Natural killer cell (primary cell): ENCODE measurements at regions of chr10 and their contacts with region 1.

Region 1: DNA sequence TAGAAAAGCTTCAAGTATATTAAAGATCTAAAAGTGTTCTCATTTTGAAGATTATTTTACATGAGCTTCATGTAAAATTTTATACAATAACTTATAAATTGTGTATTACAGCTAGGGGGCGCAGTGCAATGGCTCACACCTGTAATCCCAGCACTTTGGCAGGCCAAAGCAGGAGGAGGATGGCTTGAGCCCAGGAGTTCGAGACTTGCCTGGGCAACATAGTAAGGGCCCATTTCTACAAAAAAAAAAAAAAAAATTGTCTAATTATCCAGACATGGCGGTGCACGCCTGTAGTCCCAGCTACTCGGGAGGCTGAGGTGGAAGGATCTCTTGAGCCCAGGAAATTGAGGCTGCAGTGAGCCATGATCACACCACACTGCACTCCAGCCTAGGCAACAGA is 16.6 kb downstream of the ACBD5 start:
- DNase-seq: peak in 1 of 2 donors; percentile 79
- ATAC-seq: no peak
- H3K4me3 ChIP-seq: no peak overlapping the region
- H3K4me3 Mint-ChIP-seq: peak overlapping the region; percentile 86
- H3K27ac ChIP-seq: no peak overlapping the region
- H3K27ac Mint-ChIP-seq: peak overlapping the region; percentile 40 to 86
- H3K4me1 ChIP-seq: peaks cover 32% of the 10 kb centered on the region
- H3K4me1 Mint-ChIP-seq: peaks cover 26 to 29% of the 10 kb centered on the region in 2 donors
- H3K27me3 ChIP-seq: no peaks in the 10 kb centered on the region
- H3K27me3 Mint-ChIP-seq: no peaks in the 10 kb centered on the region
- CTCF ChIP-seq: peak; percentile 72

Region 2: GRCh38 chr10:27099916-27100812 is 123.8 kb before region 1 on chr10 and contains the start of gene ANKRD26:
- intact Hi-C with region 1: loop called (anchors 1 kb)
- DNase-seq: peak; percentile 96 to 100
- ATAC-seq: peak; percentile 84 to 87 (median 85)
- H3K4me3 ChIP-seq: peak within 1 kb of the TSS; percentile 81
- H3K4me3 Mint-ChIP-seq: peak within 1 kb of the TSS; percentile 98
- H3K27ac ChIP-seq: peak within 1 kb of the TSS; percentile 91
- H3K27ac Mint-ChIP-seq: peak within 1 kb of the TSS; percentile 96 to 98
- H3K4me1 ChIP-seq: peaks cover 29% of the 10 kb centered on the region
- H3K4me1 Mint-ChIP-seq: peaks cover 28 to 32% of the 10 kb centered on the region in 2 donors
- H3K27me3 ChIP-seq: no peaks in the 10 kb centered on the region
- H3K27me3 Mint-ChIP-seq: peaks cover 0 to 3% of the 10 kb centered on the region in 2 donors
- CTCF ChIP-seq: no peak
- total RNA-seq, gene ANKRD26: 7.0 to 10.8 (median 9.2) TPM

Region 3: GRCh38 chr10:27197980-27198620 is 25.9 kb before region 1 on chr10:
- intact Hi-C with region 1: no loop called
- DNase-seq: no peak
- ATAC-seq: no peak
- H3K4me3 ChIP-seq: no peak overlapping the region
- H3K4me3 Mint-ChIP-seq: no peak overlapping the region
- H3K27ac ChIP-seq: no peak overlapping the region
- H3K27ac Mint-ChIP-seq: peak overlapping the region in 1 of 2 donors; percentile 25
- H3K4me1 ChIP-seq: no peaks in the 10 kb centered on the region
- H3K4me1 Mint-ChIP-seq: peaks cover 6 to 14% of the 10 kb centered on the region in 2 donors
- H3K27me3 ChIP-seq: no peaks in the 10 kb centered on the region
- H3K27me3 Mint-ChIP-seq: no peaks in the 10 kb centered on the region
- CTCF ChIP-seq: no peak

Region 4: GRCh38 chr10:27241652-27242472 is 17.9 kb after region 1 on chr10:
- intact Hi-C with region 1: loop called (anchors 1 kb)
- DNase-seq: peak; percentile 86 to 95
- ATAC-seq: peak; percentile 76 to 88 (median 82)
- H3K4me3 ChIP-seq: peak overlapping the region; percentile 81
- H3K4me3 Mint-ChIP-seq: peak overlapping the region; percentile 95
- H3K27ac ChIP-seq: peak overlapping the region; percentile 87
- H3K27ac Mint-ChIP-seq: peak overlapping the region; percentile 98
- H3K4me1 ChIP-seq: peaks cover 35% of the 10 kb centered on the region
- H3K4me1 Mint-ChIP-seq: peaks cover 41 to 44% of the 10 kb centered on the region in 2 donors
- H3K27me3 ChIP-seq: no peaks in the 10 kb centered on the region
- H3K27me3 Mint-ChIP-seq: no peaks in the 10 kb centered on the region
- CTCF ChIP-seq: peak; percentile 14

Region 5: DNA sequence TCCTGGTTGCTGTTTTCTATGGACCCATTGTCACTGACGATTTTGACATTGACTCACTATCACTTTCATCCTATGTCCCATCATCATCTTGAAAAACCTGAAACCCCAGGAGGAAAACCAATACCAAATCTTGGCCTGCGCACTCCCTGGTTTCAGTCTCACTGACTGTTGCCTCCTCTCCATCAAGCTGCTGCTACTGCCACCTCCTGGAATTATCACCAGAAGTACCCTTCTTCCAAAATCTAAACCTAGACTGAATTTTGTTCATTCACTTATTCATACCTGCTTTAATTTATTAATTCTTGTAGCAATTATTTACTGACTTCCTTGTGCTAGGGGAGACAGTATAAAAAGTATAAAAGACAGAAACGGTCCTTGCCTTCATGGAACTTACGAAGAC is 61.1 kb after region 1 on chr10:
- intact Hi-C with region 1: loop called (anchors 1 kb)
- DNase-seq: peak in 1 of 2 donors; percentile 68
- ATAC-seq: peak; percentile 50 to 85 (median 73)
- H3K4me3 ChIP-seq: no peak overlapping the region
- H3K4me3 Mint-ChIP-seq: no peak overlapping the region
- H3K27ac ChIP-seq: no peak overlapping the region
- H3K27ac Mint-ChIP-seq: no peak overlapping the region
- H3K4me1 ChIP-seq: no peaks in the 10 kb centered on the region
- H3K4me1 Mint-ChIP-seq: peaks cover 6% of the 10 kb centered on the region in 2 donors
- H3K27me3 ChIP-seq: no peaks in the 10 kb centered on the region
- H3K27me3 Mint-ChIP-seq: peaks cover 0 to 2% of the 10 kb centered on the region in 2 donors
- CTCF ChIP-seq: peak; percentile 46

Region 6: GRCh38 chr10:27360581-27361172 is 136.7 kb after region 1 on chr10:
- intact Hi-C with region 1: loop called (anchors 1 kb)
- DNase-seq: peak; percentile 74 to 93
- ATAC-seq: peak; percentile 89 to 99 (median 99)
- H3K4me3 ChIP-seq: no peak overlapping the region
- H3K4me3 Mint-ChIP-seq: no peak overlapping the region
- H3K27ac ChIP-seq: no peak overlapping the region
- H3K27ac Mint-ChIP-seq: no peak overlapping the region
- H3K4me1 ChIP-seq: no peaks in the 10 kb centered on the region
- H3K4me1 Mint-ChIP-seq: peaks cover 0 to 5% of the 10 kb centered on the region in 2 donors
- H3K27me3 ChIP-seq: no peaks in the 10 kb centered on the region
- H3K27me3 Mint-ChIP-seq: peaks cover 0 to 6% of the 10 kb centered on the region in 2 donors
- CTCF ChIP-seq: peak; percentile 92

Region 7: DNA sequence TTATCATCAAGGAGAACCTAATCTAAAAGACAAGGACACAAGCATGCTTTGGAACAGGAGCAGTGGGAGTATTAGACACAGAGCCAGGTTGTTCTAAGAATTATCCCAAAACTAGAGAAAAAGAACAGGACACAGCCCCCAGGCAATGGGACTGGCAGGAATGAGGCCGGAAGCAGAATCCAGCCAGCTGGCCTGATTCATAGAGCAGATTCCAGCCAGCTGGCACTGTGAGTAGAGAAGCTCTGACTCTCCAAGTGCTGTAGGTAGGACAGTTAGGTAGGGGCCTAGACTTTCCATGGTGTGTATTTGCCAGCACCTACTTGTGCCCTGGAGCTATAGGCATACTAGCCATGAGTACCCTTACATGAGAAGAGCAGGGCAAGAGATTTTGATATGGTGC is 266.8 kb after region 1 on chr10:
- intact Hi-C with region 1: no loop called
- DNase-seq: no peak
- ATAC-seq: no peak
- H3K4me3 ChIP-seq: no peak overlapping the region
- H3K4me3 Mint-ChIP-seq: no peak overlapping the region
- H3K27ac ChIP-seq: no peak overlapping the region
- H3K27ac Mint-ChIP-seq: no peak overlapping the region
- H3K4me1 ChIP-seq: no peaks in the 10 kb centered on the region
- H3K4me1 Mint-ChIP-seq: no peaks in the 10 kb centered on the region
- H3K27me3 ChIP-seq: no peaks in the 10 kb centered on the region
- H3K27me3 Mint-ChIP-seq: peaks cover 44 to 83% of the 10 kb centered on the region in 2 donors
- CTCF ChIP-seq: no peak

Region 8: DNA sequence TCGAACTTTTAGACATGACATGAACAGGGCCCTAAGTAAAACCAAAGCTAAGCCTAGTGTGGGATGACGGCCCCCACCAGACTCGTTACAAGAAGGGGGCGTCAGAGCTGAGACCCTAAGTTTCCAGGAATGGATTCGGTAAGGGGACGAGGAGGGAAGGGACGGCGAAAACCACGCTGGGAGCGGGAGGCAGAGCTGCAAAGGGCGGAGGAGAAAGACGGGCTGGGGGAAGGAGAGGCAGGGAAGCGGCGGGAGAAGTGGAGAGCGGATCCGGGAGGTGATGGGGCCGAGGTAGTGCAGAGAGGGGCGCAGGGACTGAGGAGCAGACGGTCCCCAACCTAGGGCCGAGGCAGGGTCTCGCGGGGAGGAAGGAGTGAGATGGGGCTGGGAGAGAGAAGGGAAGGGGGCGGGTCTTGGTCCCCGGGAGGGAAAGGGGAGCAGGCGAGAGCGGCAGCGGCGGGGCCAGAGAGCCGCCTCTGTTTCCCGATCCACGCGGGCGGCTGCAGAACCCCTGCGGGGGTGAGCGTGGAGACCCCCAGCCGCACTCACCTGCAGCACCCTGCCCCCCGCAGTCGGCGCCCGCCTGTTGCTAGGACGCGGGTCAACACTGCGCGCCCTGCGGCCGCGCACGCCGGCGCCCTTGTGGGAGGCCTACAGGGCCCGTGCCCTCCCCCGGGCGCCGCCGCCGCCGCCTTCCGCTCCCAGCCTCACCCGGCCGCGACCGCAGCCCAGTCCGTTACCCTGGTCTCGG is 774.5 kb after region 1 on chr10:
- intact Hi-C with region 1: no loop called
- DNase-seq: peak in 1 of 2 donors; percentile 23
- ATAC-seq: peak in 2 of 3 donors; percentile 46 to 78
- H3K4me3 ChIP-seq: peak overlapping the region; percentile 29
- H3K4me3 Mint-ChIP-seq: peak overlapping the region; percentile 80
- H3K27ac ChIP-seq: no peak overlapping the region
- H3K27ac Mint-ChIP-seq: no peak overlapping the region
- H3K4me1 ChIP-seq: peaks cover 11% of the 10 kb centered on the region
- H3K4me1 Mint-ChIP-seq: peaks cover 12 to 17% of the 10 kb centered on the region in 2 donors
- H3K27me3 ChIP-seq: peaks cover 21% of the 10 kb centered on the region
- H3K27me3 Mint-ChIP-seq: peaks cover 39 to 60% of the 10 kb centered on the region in 2 donors
- CTCF ChIP-seq: no peak